Natural killer cell (primary cell): ENCODE measurements at regions of chr10 and their contacts with region 1.

Region 1: GRCh38 chr10:123008439-123009205 is at the starts of genes ACADSB and IKZF5:
- DNase-seq: peak; percentile 91 to 99
- ATAC-seq: peak; percentile 91 to 98 (median 91)
- H3K4me3 ChIP-seq: peak within 1 kb of the TSS; percentile 99
- H3K4me3 Mint-ChIP-seq: peak within 1 kb of the TSS; percentile 100
- H3K27ac ChIP-seq: peak within 1 kb of the TSS; percentile 99
- H3K27ac Mint-ChIP-seq: peak within 1 kb of the TSS; percentile 99 to 100
- H3K4me1 ChIP-seq: peaks cover 14% of the 10 kb centered on the region
- H3K4me1 Mint-ChIP-seq: peaks cover 53 to 55% of the 10 kb centered on the region in 2 donors
- H3K27me3 ChIP-seq: no peaks in the 10 kb centered on the region
- H3K27me3 Mint-ChIP-seq: no peaks in the 10 kb centered on the region
- CTCF ChIP-seq: no peak
- total RNA-seq, gene ACADSB: 20.8 to 27.3 (median 22.4) TPM
- total RNA-seq, gene IKZF5: 40.3 to 65.0 (median 51.8) TPM

Region 2: DNA sequence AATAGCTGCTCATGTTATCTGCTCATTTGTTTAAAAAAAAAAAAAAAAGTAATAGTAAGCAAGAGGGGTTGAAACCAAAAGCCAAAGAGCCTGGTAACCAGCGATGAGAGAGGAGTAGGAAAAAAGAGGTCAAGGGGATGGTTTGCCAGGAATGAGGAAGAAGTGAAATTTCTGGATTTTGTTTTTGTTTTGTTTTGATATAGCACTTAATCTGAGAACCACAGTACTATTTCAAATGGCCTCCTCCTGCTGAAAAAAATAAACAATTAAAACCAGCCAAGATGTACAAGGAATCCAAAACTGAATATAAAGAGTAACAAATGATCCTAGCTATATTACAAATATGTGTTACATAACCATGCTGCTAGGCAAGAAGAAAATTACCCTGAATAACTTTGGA is 1623.5 kb before region 1 on chr10:
- intact Hi-C with region 1: no loop called
- DNase-seq: no peak
- ATAC-seq: no peak
- H3K4me3 ChIP-seq: no peak overlapping the region
- H3K4me3 Mint-ChIP-seq: no peak overlapping the region
- H3K27ac ChIP-seq: no peak overlapping the region
- H3K27ac Mint-ChIP-seq: no peak overlapping the region
- H3K4me1 ChIP-seq: no peaks in the 10 kb centered on the region
- H3K4me1 Mint-ChIP-seq: no peaks in the 10 kb centered on the region
- H3K27me3 ChIP-seq: no peaks in the 10 kb centered on the region
- H3K27me3 Mint-ChIP-seq: peaks cover 0 to 2% of the 10 kb centered on the region in 2 donors
- CTCF ChIP-seq: no peak

Region 3: DNA sequence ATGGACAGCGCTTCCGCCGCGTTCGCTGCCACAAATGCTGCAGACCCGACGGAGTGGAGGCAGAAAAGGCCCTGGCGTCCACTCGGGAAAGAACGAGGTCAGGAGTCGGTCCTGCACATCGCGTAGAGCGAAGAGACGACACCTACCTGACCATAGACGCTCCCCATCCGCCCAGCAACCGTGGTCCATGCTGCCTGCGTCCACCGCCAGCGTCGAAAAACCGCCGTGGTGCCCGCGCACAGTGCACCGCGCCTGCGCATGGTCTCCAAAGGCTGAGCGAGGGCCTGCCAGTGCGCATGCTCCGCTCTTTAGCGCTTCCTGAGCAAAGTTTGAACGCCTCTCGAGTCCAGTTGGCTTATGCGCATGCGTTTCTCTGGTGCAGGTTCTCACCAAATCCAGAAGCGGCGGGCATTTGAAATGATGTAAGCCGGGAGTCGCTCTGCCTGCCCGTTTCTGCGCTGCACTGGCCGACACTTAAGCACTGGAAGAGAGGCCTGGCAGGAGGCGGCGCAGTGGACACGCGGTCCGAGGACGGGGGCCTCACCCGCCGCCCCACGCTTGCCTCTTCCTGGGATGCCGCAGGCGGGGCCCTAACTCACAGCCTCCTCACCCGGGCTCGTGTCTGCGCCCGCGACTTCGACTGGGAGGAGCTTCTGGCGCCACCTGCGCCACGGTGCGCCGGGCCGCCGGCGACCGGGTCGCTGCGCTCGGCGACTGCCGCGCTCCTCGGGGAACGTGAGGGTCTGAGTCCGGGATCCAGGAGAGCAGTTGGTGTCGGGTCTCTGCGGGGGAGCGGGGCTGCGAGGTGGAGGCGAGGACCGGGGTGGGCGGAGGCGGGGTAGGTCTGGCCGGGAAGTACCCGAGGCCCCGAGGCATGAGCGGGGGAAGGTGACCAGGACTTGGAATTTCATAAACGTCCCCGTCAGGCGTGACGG is 129.0 kb before region 1 on chr10 and contains the start of gene FAM24B:
- intact Hi-C with region 1: loop called (anchors 2 kb)
- DNase-seq: peak; percentile 84 to 99
- ATAC-seq: peak; percentile 88 to 91 (median 90)
- H3K4me3 ChIP-seq: peak within 1 kb of the TSS; percentile 61
- H3K4me3 Mint-ChIP-seq: peak within 1 kb of the TSS; percentile 93
- H3K27ac ChIP-seq: peak within 1 kb of the TSS; percentile 64
- H3K27ac Mint-ChIP-seq: peak within 1 kb of the TSS; percentile 83 to 93
- H3K4me1 ChIP-seq: peaks cover 11% of the 10 kb centered on the region
- H3K4me1 Mint-ChIP-seq: peaks cover 38 to 42% of the 10 kb centered on the region in 2 donors
- H3K27me3 ChIP-seq: no peaks in the 10 kb centered on the region
- H3K27me3 Mint-ChIP-seq: no peaks in the 10 kb centered on the region
- CTCF ChIP-seq: no peak
- total RNA-seq, gene FAM24B: 6.1 to 12.6 (median 8.5) TPM

Region 4: DNA sequence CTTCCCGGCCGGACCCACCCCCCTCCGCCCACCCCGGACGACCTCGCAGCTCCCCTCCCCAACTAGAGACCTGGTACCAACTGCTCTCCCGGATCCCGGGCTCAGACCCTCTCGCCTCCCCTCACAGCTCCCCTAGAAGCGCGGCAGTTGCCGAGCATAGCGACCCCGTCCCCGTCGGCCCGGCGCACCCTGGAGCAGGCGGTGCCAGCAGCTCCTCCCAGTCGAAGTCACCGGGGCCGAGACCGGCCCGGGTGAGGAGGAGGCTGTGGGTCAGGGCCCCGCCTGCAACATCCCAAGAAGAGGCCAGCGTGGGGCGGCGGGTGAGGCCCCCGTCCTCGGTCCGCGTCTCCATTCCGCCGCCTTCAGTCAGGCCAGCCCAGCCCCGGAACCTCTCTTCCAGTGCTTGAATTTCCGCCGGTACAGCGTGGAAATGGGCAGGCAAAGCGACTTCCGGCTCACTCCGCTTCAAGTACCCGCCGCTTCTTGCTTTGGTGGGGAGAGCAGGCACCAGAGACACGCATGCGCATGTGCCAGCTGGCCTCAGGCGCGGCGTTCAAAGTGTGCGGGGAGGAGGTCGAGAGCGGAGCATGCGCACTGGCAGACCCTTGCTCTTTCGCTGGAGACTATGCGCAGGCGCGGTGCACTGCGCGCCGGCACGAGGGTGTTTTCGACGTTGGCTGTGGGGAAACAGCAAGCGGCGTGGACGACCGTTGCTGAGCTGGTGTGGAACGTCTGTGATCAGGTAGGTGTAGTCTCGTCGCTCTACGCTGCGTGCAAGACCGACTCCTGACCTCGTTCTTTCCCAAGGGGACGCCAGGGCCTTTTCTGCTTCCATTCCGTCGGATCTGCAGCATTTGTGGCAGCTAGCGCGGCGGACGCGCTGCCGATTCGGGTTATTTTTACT is 54.5 kb before region 1 on chr10 and contains the start of gene C10orf88:
- intact Hi-C with region 1: loop called (anchors 1 kb)
- DNase-seq: peak; percentile 92 to 100
- ATAC-seq: peak; percentile 93 to 97 (median 94)
- H3K4me3 ChIP-seq: peak within 1 kb of the TSS; percentile 87
- H3K4me3 Mint-ChIP-seq: peak within 1 kb of the TSS; percentile 92
- H3K27ac ChIP-seq: peak within 1 kb of the TSS; percentile 66
- H3K27ac Mint-ChIP-seq: peak within 1 kb of the TSS; percentile 84 to 92
- H3K4me1 ChIP-seq: peaks cover 16% of the 10 kb centered on the region
- H3K4me1 Mint-ChIP-seq: peaks cover 22 to 28% of the 10 kb centered on the region in 2 donors
- H3K27me3 ChIP-seq: no peaks in the 10 kb centered on the region
- H3K27me3 Mint-ChIP-seq: peaks cover 0 to 7% of the 10 kb centered on the region in 2 donors
- CTCF ChIP-seq: no peak
- total RNA-seq, gene C10orf88: 6.1 to 8.5 (median 7.2) TPM

Region 5: GRCh38 chr10:122980209-122981065 is 28.2 kb before region 1 on chr10 and contains the start of gene PSTK:
- intact Hi-C with region 1: loop called (anchors 1 kb)
- DNase-seq: peak; percentile 92 to 96
- ATAC-seq: peak; percentile 95 to 98 (median 95)
- H3K4me3 ChIP-seq: peak within 1 kb of the TSS; percentile 88
- H3K4me3 Mint-ChIP-seq: peak within 1 kb of the TSS; percentile 90
- H3K27ac ChIP-seq: peak within 1 kb of the TSS; percentile 94
- H3K27ac Mint-ChIP-seq: peak within 1 kb of the TSS; percentile 90 to 93
- H3K4me1 ChIP-seq: peaks cover 12% of the 10 kb centered on the region
- H3K4me1 Mint-ChIP-seq: peaks cover 16 to 17% of the 10 kb centered on the region in 2 donors
- H3K27me3 ChIP-seq: no peaks in the 10 kb centered on the region
- H3K27me3 Mint-ChIP-seq: peaks cover 9 to 15% of the 10 kb centered on the region in 2 donors
- CTCF ChIP-seq: peak; percentile 95
- total RNA-seq, gene PSTK: 10.6 to 13.8 (median 13.7) TPM

Region 6: DNA sequence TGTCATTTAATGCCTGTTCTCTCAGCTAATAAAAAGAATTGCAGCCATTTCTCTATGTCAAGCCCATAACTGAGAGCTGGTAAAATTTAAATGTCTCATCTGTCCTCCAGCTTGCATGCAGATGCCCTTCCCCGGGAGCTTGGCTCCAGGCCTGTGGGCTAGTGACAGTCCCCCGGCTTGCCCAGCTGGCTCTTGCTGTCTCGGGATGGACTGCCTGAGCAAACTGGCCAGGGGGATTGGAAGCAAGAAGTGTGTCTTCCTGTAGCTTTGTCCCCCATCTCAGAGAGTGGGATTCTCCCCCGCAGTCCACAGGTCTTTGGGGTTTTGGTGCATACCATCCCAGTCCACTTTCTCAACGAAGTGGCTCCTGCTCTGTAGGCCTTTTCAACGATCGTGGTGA is 73.3 kb after region 1 on chr10:
- intact Hi-C with region 1: no loop called
- DNase-seq: no peak
- ATAC-seq: no peak
- H3K4me3 ChIP-seq: no peak overlapping the region
- H3K4me3 Mint-ChIP-seq: no peak overlapping the region
- H3K27ac ChIP-seq: no peak overlapping the region
- H3K27ac Mint-ChIP-seq: no peak overlapping the region
- H3K4me1 ChIP-seq: no peaks in the 10 kb centered on the region
- H3K4me1 Mint-ChIP-seq: no peaks in the 10 kb centered on the region
- H3K27me3 ChIP-seq: no peaks in the 10 kb centered on the region
- H3K27me3 Mint-ChIP-seq: peaks cover 9 to 19% of the 10 kb centered on the region in 2 donors
- CTCF ChIP-seq: no peak

Region 7: DNA sequence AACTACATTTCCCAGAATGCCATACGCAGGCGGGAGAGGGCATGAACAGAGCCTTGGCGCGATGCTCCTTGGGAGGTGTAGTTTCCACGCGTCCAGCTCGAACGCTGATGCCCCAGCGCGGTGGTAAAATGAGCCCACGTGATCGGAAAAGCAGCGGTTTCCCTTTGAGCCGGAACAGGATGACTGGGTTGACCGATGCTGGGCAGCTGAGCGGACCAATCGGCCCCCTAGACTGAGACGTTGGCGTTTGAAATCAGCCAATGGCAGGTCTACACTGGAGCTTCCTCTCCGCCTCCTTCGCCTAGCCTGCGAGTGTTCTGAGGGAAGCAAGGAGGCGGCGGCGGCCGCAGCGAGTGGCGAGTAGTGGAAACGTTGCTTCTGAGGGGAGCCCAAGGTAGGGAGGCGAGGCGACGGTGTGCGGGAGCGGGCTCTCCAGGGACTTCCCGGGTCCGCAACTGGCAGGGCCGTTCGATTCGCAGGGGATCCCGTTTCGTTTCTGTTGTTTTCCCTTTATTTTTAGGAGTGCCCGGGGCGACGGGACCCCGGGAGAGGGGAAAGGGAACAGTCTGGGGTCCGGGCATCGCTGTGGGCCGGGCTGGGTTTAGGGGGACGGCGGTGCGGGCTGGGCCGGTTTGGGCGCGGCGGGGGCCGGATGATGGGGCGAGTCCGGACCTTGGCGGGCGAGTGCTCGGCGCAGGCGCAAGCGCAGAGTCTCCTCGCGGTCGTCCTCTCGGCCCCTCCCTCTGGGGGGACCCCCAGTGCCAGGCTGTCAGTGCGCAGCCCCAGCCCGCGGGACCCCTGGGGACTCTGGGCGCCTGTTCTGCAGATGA is 145.7 kb after region 1 on chr10 and contains the start of gene BUB3:
- intact Hi-C with region 1: loop called (anchors 1 kb)
- DNase-seq: peak; percentile 89 to 99
- ATAC-seq: peak; percentile 88 to 97 (median 92)
- H3K4me3 ChIP-seq: peak within 1 kb of the TSS; percentile 99
- H3K4me3 Mint-ChIP-seq: peak within 1 kb of the TSS; percentile 99
- H3K27ac ChIP-seq: peak within 1 kb of the TSS; percentile 93
- H3K27ac Mint-ChIP-seq: peak within 1 kb of the TSS; percentile 96 to 100
- H3K4me1 ChIP-seq: peaks cover 37% of the 10 kb centered on the region
- H3K4me1 Mint-ChIP-seq: peaks cover 51 to 59% of the 10 kb centered on the region in 2 donors
- H3K27me3 ChIP-seq: peaks cover 34% of the 10 kb centered on the region
- H3K27me3 Mint-ChIP-seq: peaks cover 20 to 21% of the 10 kb centered on the region in 2 donors
- CTCF ChIP-seq: no peak
- total RNA-seq, gene BUB3: 122 to 145 (median 125) TPM